Gastrocnemius medialis (tissue), 4 donors: ENCODE measurements at regions of chr19 and their contacts with region 1.

Region 1: GRCh38 chr19:33496038-33496895 is 25.3 kb downstream of the PEPD start:
- DNase-seq: no peak
- ATAC-seq: no peak
- H3K4me3 ChIP-seq: no peak overlapping the region
- H3K27ac ChIP-seq: no peak overlapping the region
- H3K4me1 ChIP-seq: no peaks in the 10 kb centered on the region
- H3K27me3 ChIP-seq: no peaks in the 10 kb centered on the region
- CTCF ChIP-seq: no peak
- POLR2A ChIP-seq: no peak

Region 2: GRCh38 chr19:33545217-33545981 is 49.1 kb after region 1 on chr19:
- in situ Hi-C with region 1: no loop called
- intact Hi-C with region 1: loop called (anchors 2 kb)
- DNase-seq: no peak
- ATAC-seq: no peak
- H3K4me3 ChIP-seq: no peak overlapping the region
- H3K27ac ChIP-seq: no peak overlapping the region
- H3K4me1 ChIP-seq: no peaks in the 10 kb centered on the region
- H3K27me3 ChIP-seq: peaks cover 2 to 5% (median 3%) of the 10 kb centered on the region in 3 donors
- CTCF ChIP-seq: no peak
- POLR2A ChIP-seq: no peak